IMR-90 (cell line): ENCODE measurements at regions of chr1 and their contacts with region 1.

Region 1: DNA sequence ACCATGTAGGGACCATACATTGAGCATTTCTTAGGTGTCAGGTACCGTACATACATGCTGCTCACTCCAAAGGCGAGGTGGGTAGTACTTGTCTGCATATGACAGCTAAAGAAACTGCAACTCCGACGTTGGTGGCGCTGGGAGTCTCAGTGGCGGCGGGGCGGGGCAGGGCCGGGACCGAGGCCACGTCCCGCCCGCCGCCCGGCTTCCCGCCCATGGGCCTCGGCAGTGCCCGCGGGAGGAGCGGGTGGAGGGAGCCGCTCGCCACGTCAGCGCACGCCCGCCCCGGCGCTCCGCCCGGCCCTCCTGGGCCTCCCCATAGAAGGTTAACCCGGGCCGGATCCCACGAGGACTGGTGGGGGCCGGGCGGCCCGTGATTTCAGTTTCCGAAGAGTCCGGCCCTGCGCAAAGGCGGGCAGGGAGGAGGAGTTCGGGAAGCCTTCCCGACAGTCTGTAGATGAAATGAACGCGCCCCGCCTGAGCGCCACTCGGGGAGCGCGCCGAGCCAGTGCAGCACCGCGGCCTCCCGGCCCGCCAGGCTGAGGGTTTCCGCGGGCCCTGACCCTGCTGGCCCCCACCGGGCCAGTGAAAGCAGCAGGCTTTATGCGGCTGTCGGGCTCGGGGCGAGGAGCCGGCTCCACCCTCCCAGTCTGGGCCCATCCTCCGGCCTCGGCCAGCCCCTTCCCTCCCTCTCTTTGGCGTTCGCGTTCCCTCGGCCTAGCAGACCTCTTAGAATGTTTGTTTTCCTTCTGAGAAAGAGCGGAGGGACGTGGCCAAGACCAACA is 119.9 kb upstream of the JUN start:
- DNase-seq: peak; percentile 89
- ATAC-seq: peak; percentile 89
- H3K4me3 ChIP-seq: peak overlapping the region; percentile 55
- H3K27ac ChIP-seq: peak overlapping the region; percentile 93
- H3K4me1 ChIP-seq: peaks cover 11% of the 10 kb centered on the region
- H3K27me3 ChIP-seq: no peaks in the 10 kb centered on the region
- CTCF ChIP-seq: no peak
- POLR2A ChIP-seq: peak; percentile 92
- RAD21 ChIP-seq: 0 out of 2 replicates have a peak, but pooled peaks have one; percentile 1

Region 2: GRCh38 chr1:59025898-59026426 is 122.3 kb after region 1 on chr1:
- CTCF ChIA-PET with region 1: no interaction called
- POLR2A ChIA-PET with region 1: no interaction called
- dilution Hi-C with region 1: no loop called
- in situ Hi-C with region 1: no loop called
- intact Hi-C with region 1: loop called (anchors 5 kb)
- DNase-seq: peak; percentile 47
- ATAC-seq: no peak
- H3K4me3 ChIP-seq: no peak overlapping the region
- H3K27ac ChIP-seq: peak overlapping the region; percentile 54; the same call in 1 of the 2 replicates
- H3K4me1 ChIP-seq: peaks cover 14% of the 10 kb centered on the region
- H3K27me3 ChIP-seq: no peaks in the 10 kb centered on the region
- CTCF ChIP-seq: no peak
- POLR2A ChIP-seq: no peak
- RAD21 ChIP-seq: no peak

Region 3: DNA sequence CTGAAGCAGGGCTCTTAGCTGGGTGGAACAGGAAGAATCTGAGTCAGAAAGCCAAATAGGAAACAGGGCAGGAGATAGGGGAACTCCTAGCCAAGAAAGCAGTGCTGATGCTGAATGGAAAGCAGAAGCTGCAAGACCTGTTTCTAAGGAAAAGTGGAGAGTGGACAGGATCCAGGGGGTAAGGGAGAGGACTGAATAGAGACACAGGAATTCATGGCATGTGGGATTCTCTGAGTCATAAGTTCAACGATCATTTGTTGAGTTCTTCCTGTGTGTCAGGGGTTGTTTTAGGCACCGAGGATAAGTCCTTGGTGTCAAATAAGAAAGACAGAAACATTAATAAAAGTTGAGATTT is 239.4 kb after region 1 on chr1:
- CTCF ChIA-PET with region 1: no interaction called
- POLR2A ChIA-PET with region 1: no interaction called
- dilution Hi-C with region 1: no loop called
- in situ Hi-C with region 1: no loop called
- intact Hi-C with region 1: loop called (anchors 5 kb)
- DNase-seq: peak; percentile 98
- ATAC-seq: peak; percentile 83
- H3K4me3 ChIP-seq: no peak overlapping the region
- H3K27ac ChIP-seq: peak overlapping the region; percentile 47
- H3K4me1 ChIP-seq: peaks cover 17% of the 10 kb centered on the region
- H3K27me3 ChIP-seq: no peaks in the 10 kb centered on the region
- CTCF ChIP-seq: no peak
- POLR2A ChIP-seq: no peak
- RAD21 ChIP-seq: peak; percentile 24; the same call in 1 of the 2 replicates

Region 4: GRCh38 chr1:59266180-59266926 is 362.6 kb after region 1 on chr1:
- CTCF ChIA-PET with region 1: no interaction called
- POLR2A ChIA-PET with region 1: no interaction called
- dilution Hi-C with region 1: no loop called
- in situ Hi-C with region 1: no loop called
- intact Hi-C with region 1: no loop called
- DNase-seq: no peak
- ATAC-seq: no peak
- H3K4me3 ChIP-seq: no peak overlapping the region
- H3K27ac ChIP-seq: no peak overlapping the region
- H3K4me1 ChIP-seq: no peaks in the 10 kb centered on the region
- H3K27me3 ChIP-seq: no peaks in the 10 kb centered on the region
- CTCF ChIP-seq: no peak
- POLR2A ChIP-seq: no peak
- RAD21 ChIP-seq: no peak

Region 5: GRCh38 chr1:59699227-59699847 is 795.6 kb after region 1 on chr1:
- CTCF ChIA-PET with region 1: no interaction called
- POLR2A ChIA-PET with region 1: no interaction called
- dilution Hi-C with region 1: no loop called
- in situ Hi-C with region 1: loop called (anchors 10 kb)
- intact Hi-C with region 1: loop called (anchors 5 kb)
- DNase-seq: peak; percentile 57
- ATAC-seq: 0 out of 2 replicates have a peak, but pooled peaks have one; percentile 19
- H3K4me3 ChIP-seq: no peak overlapping the region
- H3K27ac ChIP-seq: no peak overlapping the region
- H3K4me1 ChIP-seq: peaks cover 21% of the 10 kb centered on the region
- H3K27me3 ChIP-seq: no peaks in the 10 kb centered on the region
- CTCF ChIP-seq: peak; percentile 91
- POLR2A ChIP-seq: 0 out of 2 replicates have a peak, but pooled peaks have one; percentile 35
- RAD21 ChIP-seq: peak; percentile 97